CD4-positive, alpha-beta T cell (primary cell): ENCODE measurements at regions of chr2 and their contacts with region 1.

Region 1: DNA sequence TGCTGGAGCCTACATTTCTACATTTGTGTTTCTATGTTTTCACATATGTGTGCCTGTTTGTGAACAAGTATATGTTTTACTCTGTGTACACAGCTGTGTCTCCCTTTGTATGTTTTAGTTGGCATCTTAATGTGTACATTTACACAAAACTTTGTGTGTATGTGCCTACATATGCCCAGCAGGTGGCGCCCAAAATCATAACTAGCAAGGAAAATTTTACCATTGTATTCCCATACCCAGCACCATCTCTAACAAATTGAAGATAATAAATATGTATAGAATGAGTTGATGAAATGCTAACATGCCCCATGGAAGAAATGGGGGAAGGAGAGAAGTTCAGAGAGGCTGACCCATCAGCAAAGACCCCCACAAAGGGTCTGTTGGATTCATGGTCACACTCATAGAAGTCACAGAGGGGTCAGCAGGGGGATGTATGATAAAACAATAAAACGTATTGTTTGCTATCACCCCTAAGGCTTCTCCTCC is 48.1 kb downstream of the PKDCC start:
- DNase-seq: peak; percentile 67 to 90 (median 74)
- ATAC-seq: peak; percentile 69
- H3K4me3 ChIP-seq: no peak overlapping the region
- H3K4me3 Mint-ChIP-seq: peak overlapping the region; percentile 23
- H3K27ac ChIP-seq: no peak overlapping the region
- H3K27ac Mint-ChIP-seq: peak overlapping the region; percentile 41
- H3K4me1 ChIP-seq: peaks cover 51% of the 10 kb centered on the region
- H3K4me1 Mint-ChIP-seq: peaks cover 50% of the 10 kb centered on the region
- H3K27me3 ChIP-seq: no peaks in the 10 kb centered on the region
- H3K27me3 Mint-ChIP-seq: no peaks in the 10 kb centered on the region
- CTCF ChIP-seq: peak; percentile 86

Region 2: GRCh38 chr2:42040643-42041278 is 55.2 kb before region 1 on chr2:
- CTCF ChIA-PET with region 1: no interaction called
- POLR2A ChIA-PET with region 1: no interaction called
- intact Hi-C with region 1: no loop called
- DNase-seq: no peak
- ATAC-seq: no peak
- H3K4me3 ChIP-seq: no peak overlapping the region
- H3K4me3 Mint-ChIP-seq: no peak overlapping the region
- H3K27ac ChIP-seq: no peak overlapping the region
- H3K27ac Mint-ChIP-seq: no peak overlapping the region
- H3K4me1 ChIP-seq: no peaks in the 10 kb centered on the region
- H3K4me1 Mint-ChIP-seq: no peaks in the 10 kb centered on the region
- H3K27me3 ChIP-seq: peaks cover 5 to 29% of the 10 kb centered on the region in 2 experiments
- H3K27me3 Mint-ChIP-seq: peaks cover 51% of the 10 kb centered on the region
- CTCF ChIP-seq: no peak

Region 3: DNA sequence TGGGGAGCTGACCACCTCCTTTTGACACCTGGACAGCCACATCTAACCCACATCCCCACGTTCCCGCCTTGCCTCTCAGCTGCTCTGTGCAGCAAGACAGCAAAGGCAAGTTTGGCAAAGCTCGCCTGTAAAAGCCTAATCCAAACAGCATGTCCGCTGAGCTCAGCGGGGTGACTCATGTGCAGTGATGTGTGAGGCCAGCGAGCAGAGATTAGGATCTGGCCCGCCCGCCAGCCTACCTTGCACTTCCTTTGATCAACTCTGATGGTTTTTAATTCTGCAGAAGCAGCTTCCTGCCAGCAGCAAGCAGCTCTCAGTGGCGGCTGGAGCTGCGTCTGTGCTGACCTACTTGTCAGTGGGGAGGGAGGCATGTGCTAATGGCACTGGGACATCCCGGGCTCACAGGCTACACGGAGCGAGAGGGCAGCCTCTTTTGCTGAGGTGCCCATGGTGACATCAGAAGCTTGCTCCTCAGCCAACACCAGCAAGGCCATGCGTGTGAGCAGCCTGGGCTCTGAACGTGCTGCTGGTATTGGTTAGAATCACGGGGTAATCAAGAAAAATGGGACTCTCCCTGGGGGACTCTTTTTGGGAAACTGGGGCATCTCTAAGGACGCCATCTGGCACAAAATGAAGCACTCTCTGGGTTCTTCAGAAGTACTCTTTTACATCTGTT is 37.1 kb after region 1 on chr2:
- CTCF ChIA-PET with region 1: interaction called, 5 read pairs
- POLR2A ChIA-PET with region 1: interaction called, 255 read pairs
- intact Hi-C with region 1: loop called in 1 of 2 experiments (anchors 2 kb)
- DNase-seq: peak; percentile 81 to 98 (median 88)
- ATAC-seq: peak; percentile 87
- H3K4me3 ChIP-seq: peak overlapping the region; percentile 29
- H3K4me3 Mint-ChIP-seq: peak overlapping the region; percentile 63
- H3K27ac ChIP-seq: peak overlapping the region; percentile 78 to 95
- H3K27ac Mint-ChIP-seq: peak overlapping the region; percentile 87
- H3K4me1 ChIP-seq: peaks cover 100% of the 10 kb centered on the region
- H3K4me1 Mint-ChIP-seq: peaks cover 88% of the 10 kb centered on the region
- H3K27me3 ChIP-seq: no peaks in the 10 kb centered on the region
- H3K27me3 Mint-ChIP-seq: no peaks in the 10 kb centered on the region
- CTCF ChIP-seq: no peak

Region 4: GRCh38 chr2:42238644-42239288 is 142.8 kb after region 1 on chr2:
- CTCF ChIA-PET with region 1: interaction called, 3 read pairs
- POLR2A ChIA-PET with region 1: interaction called, 3 read pairs
- intact Hi-C with region 1: loop called (anchors 1 to 5 kb)
- DNase-seq: peak in 13 of 14 experiments; percentile 12 to 71 (median 27)
- ATAC-seq: peak; percentile 79
- H3K4me3 ChIP-seq: no peak overlapping the region
- H3K4me3 Mint-ChIP-seq: no peak overlapping the region
- H3K27ac ChIP-seq: no peak overlapping the region
- H3K27ac Mint-ChIP-seq: no peak overlapping the region
- H3K4me1 ChIP-seq: peaks cover 29% of the 10 kb centered on the region
- H3K4me1 Mint-ChIP-seq: peaks cover 95% of the 10 kb centered on the region
- H3K27me3 ChIP-seq: no peaks in the 10 kb centered on the region
- H3K27me3 Mint-ChIP-seq: no peaks in the 10 kb centered on the region
- CTCF ChIP-seq: peak; percentile 52

Region 5: DNA sequence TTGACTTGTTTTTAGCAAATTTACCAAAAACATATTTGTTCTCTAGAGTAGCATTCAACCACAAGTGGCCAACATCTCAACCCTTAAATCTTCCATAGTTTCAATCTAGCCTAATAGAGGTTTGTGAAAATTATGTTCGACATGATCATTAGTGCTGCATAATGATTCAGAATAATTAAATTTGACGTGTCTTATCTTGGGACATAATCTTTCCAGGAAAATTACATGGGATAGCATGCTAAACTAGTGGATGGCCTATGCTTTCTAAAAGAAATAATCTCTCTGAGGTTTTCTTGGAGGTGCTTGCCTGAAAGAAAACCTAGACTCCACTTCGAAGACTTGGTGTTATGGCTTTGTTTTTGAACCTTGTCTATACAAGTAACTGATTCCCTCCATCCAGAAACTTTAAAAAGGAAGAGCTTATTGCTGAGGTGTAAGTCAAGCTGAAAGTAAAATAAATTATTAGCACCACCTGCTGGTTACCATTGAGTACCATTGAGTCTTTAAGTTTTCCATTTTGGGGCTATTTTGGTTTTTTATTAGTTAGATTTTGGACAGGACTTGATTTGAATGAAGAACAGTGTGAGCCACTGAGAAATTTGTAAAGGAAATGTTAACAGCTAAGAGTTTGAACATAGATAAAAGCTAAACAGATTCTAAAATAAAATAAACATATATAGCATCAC is 232.3 kb after region 1 on chr2:
- CTCF ChIA-PET with region 1: interaction called, 3 read pairs
- POLR2A ChIA-PET with region 1: no interaction called
- intact Hi-C with region 1: loop called (anchors 1 to 5 kb)
- DNase-seq: peak in 3 of 14 experiments; percentile 44 to 56 (median 46)
- ATAC-seq: peak; percentile 52
- H3K4me3 ChIP-seq: no peak overlapping the region
- H3K4me3 Mint-ChIP-seq: no peak overlapping the region
- H3K27ac ChIP-seq: no peak overlapping the region
- H3K27ac Mint-ChIP-seq: peak overlapping the region; percentile 54
- H3K4me1 ChIP-seq: no peaks in the 10 kb centered on the region
- H3K4me1 Mint-ChIP-seq: peaks cover 4% of the 10 kb centered on the region
- H3K27me3 ChIP-seq: no peaks in the 10 kb centered on the region
- H3K27me3 Mint-ChIP-seq: no peaks in the 10 kb centered on the region
- CTCF ChIP-seq: peak; percentile 51

Region 6: GRCh38 chr2:42360890-42361727 is 265.1 kb after region 1 on chr2 and contains the start of gene COX7A2L:
- CTCF ChIA-PET with region 1: interaction called, 3 read pairs
- POLR2A ChIA-PET with region 1: no interaction called
- intact Hi-C with region 1: loop called (anchors 5 to 10 kb)
- DNase-seq: peak; percentile 93 to 98 (median 96)
- ATAC-seq: peak; percentile 91
- H3K4me3 ChIP-seq: peak within 1 kb of the TSS; percentile 88
- H3K4me3 Mint-ChIP-seq: peak within 1 kb of the TSS; percentile 88
- H3K27ac ChIP-seq: peak within 1 kb of the TSS; percentile 91 to 96
- H3K27ac Mint-ChIP-seq: peak within 1 kb of the TSS; percentile 99
- H3K4me1 ChIP-seq: peaks cover 34% of the 10 kb centered on the region
- H3K4me1 Mint-ChIP-seq: peaks cover 45% of the 10 kb centered on the region
- H3K27me3 ChIP-seq: no peaks in the 10 kb centered on the region
- H3K27me3 Mint-ChIP-seq: no peaks in the 10 kb centered on the region
- CTCF ChIP-seq: no peak
- total RNA-seq, gene COX7A2L: 51.3 to 57.3 TPM